ENCODE measurements at regions of chr4 and their contacts with region 1.

Region 1: DNA sequence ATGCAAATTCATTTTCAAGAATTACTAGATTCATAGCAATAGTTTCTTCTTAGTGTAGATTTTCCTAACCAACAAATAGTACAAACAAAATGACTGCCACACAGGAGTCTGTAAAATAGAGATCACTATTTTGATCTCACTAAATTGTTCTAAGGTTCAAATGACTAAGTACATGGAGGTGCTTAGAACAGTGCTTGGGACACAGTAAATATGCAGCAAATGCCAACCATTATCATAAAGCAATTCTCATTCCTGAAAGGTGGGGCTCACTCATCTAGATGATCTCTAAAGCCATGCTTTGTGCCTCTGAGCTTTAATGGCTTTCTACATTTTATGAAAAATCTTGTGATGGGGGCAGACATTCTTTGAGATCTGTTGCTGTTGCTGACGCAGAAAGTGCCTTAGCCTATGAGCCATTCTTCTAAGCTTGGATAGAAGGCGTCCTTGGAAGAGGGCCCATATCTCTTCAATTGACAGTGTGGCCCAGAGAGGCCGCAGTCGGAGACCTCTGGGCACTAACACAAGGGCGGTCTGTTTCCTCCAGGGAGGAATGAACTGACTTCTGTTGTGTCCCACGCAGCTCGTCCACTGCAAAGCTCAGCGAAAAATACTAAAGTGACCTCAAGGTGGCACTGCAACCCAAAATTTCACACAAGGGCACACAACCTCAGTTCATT is 23.5 kb downstream of the TLR10 start:
- DNase-seq: peak in 1 of 2 donors; percentile 59
- ATAC-seq: peak; percentile 73

Region 2: GRCh38 chr4:38509551-38509950 is 249.7 kb before region 1 on chr4:
- intact Hi-C with region 1: no loop called
- DNase-seq: no peak
- ATAC-seq: no peak

Region 3: GRCh38 chr4:38856524-38857337 is 97.5 kb after region 1 on chr4 and contains the start of gene TLR6:
- intact Hi-C with region 1: loop called in 1 of 2 experiments (anchors 5 kb)
- DNase-seq: peak in 1 of 2 donors; percentile 75
- ATAC-seq: peak; percentile 75
- total RNA-seq, gene TLR6: 1.4 to 2.7 TPM

Region 4: GRCh38 chr4:38930204-38930603 is 171.0 kb after region 1 on chr4:
- intact Hi-C with region 1: no loop called
- DNase-seq: no peak
- ATAC-seq: no peak

Region 5: DNA sequence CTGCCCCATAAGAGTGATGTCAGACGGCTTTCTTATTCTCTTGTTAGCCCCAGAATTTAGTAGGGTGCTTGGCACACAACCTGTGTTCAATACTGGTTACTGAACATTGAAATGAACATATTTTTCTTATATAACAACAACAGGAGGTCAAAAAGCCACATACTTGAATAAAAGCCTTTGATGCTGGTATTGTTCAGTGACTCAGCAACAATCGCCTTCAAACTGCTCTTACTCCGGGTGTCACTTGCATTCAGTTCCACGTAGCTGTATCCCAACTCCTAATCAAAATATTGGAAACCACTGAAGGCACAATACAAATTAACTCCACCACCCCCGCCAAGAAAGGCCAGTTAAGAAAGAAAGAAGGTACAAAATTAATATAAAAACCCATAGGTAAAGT is 545.4 kb after region 1 on chr4:
- intact Hi-C with region 1: no loop called
- DNase-seq: no peak
- ATAC-seq: no peak

Measured in left colon (tissue), 2 donors.